ENCODE measurements at regions of chr12 and their contacts with region 1.

Region 1: GRCh38 chr12:57111031-57111734 is at the start of gene STAT6:
- DNase-seq: peak; percentile 81
- H3K4me3 Mint-ChIP-seq: peak within 1 kb of the TSS; percentile 77
- H3K27ac Mint-ChIP-seq: peak within 1 kb of the TSS; percentile 84
- H3K4me1 Mint-ChIP-seq: peaks cover 37% of the 10 kb centered on the region
- H3K27me3 Mint-ChIP-seq: peaks cover 6% of the 10 kb centered on the region
- CTCF ChIP-seq: no peak
- total RNA-seq, gene STAT6: 213 and 243 TPM in 2 replicates

Region 2: GRCh38 chr12:56763753-56764657 is 347.2 kb before region 1 on chr12:
- CTCF ChIA-PET with region 1: interaction called, 3 read pairs
- intact Hi-C with region 1: loop called (anchors 5 kb)
- DNase-seq: no peak
- H3K4me3 Mint-ChIP-seq: no peak overlapping the region
- H3K27ac Mint-ChIP-seq: no peak overlapping the region
- H3K4me1 Mint-ChIP-seq: peaks cover 9% of the 10 kb centered on the region
- H3K27me3 Mint-ChIP-seq: peaks cover 25% of the 10 kb centered on the region
- CTCF ChIP-seq: no peak

Region 3: DNA sequence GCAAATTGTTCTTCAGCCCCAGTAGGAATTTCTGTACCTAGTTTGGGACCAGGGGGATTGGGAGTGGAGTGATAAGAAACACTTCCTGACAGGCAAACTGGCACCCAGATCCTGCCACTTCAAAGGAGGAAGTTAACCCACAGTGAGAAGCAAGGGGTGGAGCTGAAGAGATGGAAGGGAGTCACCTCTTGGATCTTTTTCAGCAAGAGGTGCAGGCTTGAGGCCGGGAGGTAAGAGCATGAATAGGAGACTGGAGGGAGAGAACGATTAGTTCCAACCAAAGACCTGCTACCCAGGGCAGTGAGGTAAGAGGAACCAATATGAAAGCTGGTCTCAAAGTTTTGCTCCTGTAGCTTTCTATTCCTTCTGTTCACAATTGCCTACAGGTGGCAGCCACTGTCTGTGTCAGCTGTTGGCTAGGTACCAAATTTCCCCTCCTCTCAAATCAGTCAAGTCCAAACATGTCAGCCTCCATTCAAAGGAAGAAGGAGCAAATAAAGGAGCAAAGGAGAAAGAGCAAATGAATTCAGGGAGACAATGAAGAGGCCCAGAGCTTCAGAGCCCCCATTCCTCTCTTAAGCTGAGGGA is 80.0 kb before region 1 on chr12:
- CTCF ChIA-PET with region 1: interaction called, 11 read pairs
- intact Hi-C with region 1: no loop called
- DNase-seq: no peak
- H3K4me3 Mint-ChIP-seq: no peak overlapping the region
- H3K27ac Mint-ChIP-seq: no peak overlapping the region
- H3K4me1 Mint-ChIP-seq: peaks cover 7% of the 10 kb centered on the region
- H3K27me3 Mint-ChIP-seq: peaks cover 59% of the 10 kb centered on the region
- CTCF ChIP-seq: no peak

Region 4: DNA sequence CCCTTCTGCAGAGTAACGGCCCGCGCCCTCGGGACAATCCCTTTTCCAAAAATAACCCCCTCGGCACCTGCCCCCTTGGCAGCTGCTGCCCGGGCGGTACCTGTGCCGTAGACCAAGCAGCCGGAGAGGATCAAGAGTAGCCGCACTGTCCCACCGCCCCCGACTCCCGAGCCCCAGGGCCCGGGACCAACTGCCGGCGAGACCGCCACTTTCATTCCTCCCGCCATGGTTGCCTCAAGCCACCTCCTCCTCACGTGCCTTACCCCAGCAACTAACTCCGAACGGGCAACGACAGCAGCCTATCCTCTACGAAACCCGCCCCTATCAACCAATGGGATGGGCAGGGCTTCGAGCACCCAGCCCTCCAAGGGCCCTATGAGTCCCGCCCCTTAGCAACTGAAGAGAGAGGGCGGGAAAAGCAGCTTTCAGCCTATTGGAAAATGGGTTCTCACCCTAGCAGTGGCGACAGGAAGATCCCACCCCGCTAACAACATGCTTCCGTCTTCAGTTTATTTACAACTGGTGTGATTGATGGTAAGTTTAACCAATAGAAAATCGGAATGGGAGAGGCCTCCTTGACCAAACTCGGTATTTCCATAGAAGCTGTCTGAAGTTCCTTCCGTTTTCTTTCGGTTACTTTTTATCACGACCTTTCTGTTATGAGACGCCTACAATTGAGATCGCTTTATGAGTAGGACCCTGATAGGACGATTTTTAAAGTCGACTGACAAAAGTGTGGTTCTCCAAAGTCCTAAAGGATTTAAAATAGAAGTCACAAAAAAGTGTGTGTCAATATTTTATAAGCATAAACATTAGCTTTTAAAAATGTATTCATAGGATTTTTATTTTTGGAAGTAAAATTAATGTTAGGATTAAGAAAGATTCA is 32.4 kb before region 1 on chr12 and contains the start of gene NEMP1:
- CTCF ChIA-PET with region 1: interaction called, 42 read pairs
- intact Hi-C with region 1: no loop called
- DNase-seq: peak; percentile 98
- H3K4me3 Mint-ChIP-seq: peak within 1 kb of the TSS; percentile 98
- H3K27ac Mint-ChIP-seq: peak within 1 kb of the TSS; percentile 93
- H3K4me1 Mint-ChIP-seq: no peaks in the 10 kb centered on the region
- H3K27me3 Mint-ChIP-seq: no peaks in the 10 kb centered on the region
- CTCF ChIP-seq: no peak
- total RNA-seq, gene NEMP1: 60.4 and 63.2 TPM in 2 replicates

Region 5: GRCh38 chr12:57124259-57124877 is 13.2 kb after region 1 on chr12:
- CTCF ChIA-PET with region 1: interaction called, 28 read pairs
- intact Hi-C with region 1: no loop called
- DNase-seq: peak; percentile 84
- H3K4me3 Mint-ChIP-seq: no peak overlapping the region
- H3K27ac Mint-ChIP-seq: no peak overlapping the region
- H3K4me1 Mint-ChIP-seq: no peaks in the 10 kb centered on the region
- H3K27me3 Mint-ChIP-seq: peaks cover 21% of the 10 kb centered on the region
- CTCF ChIP-seq: peak; percentile 91

Region 6: GRCh38 chr12:57166971-57167371 is 55.8 kb after region 1 on chr12:
- CTCF ChIA-PET with region 1: no interaction called
- intact Hi-C with region 1: no loop called
- DNase-seq: peak; percentile 28
- H3K4me3 Mint-ChIP-seq: no peak overlapping the region
- H3K27ac Mint-ChIP-seq: no peak overlapping the region
- H3K4me1 Mint-ChIP-seq: peaks cover 23% of the 10 kb centered on the region
- H3K27me3 Mint-ChIP-seq: peaks cover 24% of the 10 kb centered on the region
- CTCF ChIP-seq: no peak

Region 7: DNA sequence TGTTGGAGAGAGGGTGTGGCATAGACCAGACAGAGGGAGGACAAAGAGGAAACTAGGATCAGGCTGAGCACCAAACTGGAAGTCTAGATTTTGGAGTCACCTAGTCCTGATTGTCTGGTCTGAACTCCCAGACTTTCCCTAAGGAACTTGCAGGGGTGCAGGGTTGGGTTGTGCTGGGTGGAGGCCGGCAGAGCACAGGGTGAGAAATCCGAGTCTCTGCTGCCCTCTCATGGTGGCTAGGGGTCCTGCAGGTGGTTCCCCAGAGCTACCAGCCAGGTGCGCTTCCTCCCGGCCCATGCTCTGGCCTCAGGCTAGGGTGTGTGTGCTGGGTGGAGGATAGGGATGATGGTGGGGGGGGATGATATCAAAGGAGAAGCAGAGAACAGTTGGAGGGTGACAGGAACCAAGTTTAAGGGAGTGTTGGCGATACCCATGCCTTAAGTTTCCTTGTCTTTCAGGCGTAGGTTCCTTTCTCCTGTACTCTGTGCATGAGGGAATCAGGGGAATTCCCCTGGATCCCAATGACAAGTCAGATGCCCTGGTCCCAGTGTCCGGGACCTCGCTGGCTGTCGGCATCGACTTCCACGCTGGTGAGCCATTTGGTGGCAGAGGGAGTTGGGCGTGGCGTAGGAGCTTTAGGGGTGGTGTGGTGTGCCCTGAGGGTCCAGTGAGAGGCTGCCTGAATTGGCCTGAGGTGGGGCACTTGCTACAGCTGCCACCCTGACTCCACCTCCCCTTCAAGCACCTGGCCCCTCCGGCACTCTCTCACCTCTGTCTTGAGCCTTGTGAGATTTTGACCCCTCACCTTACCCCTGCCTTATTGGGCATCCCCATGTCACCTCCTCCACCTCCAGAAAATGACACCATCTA is 72.0 kb after region 1 on chr12:
- CTCF ChIA-PET with region 1: interaction called, 14 read pairs
- intact Hi-C with region 1: no loop called
- DNase-seq: peak; percentile 93
- H3K4me3 Mint-ChIP-seq: no peak overlapping the region
- H3K27ac Mint-ChIP-seq: no peak overlapping the region
- H3K4me1 Mint-ChIP-seq: no peaks in the 10 kb centered on the region
- H3K27me3 Mint-ChIP-seq: peaks cover 9% of the 10 kb centered on the region
- CTCF ChIP-seq: peak; percentile 83